ENCODE measurements at regions of chr3 and their contacts with region 1.

Region 1: DNA sequence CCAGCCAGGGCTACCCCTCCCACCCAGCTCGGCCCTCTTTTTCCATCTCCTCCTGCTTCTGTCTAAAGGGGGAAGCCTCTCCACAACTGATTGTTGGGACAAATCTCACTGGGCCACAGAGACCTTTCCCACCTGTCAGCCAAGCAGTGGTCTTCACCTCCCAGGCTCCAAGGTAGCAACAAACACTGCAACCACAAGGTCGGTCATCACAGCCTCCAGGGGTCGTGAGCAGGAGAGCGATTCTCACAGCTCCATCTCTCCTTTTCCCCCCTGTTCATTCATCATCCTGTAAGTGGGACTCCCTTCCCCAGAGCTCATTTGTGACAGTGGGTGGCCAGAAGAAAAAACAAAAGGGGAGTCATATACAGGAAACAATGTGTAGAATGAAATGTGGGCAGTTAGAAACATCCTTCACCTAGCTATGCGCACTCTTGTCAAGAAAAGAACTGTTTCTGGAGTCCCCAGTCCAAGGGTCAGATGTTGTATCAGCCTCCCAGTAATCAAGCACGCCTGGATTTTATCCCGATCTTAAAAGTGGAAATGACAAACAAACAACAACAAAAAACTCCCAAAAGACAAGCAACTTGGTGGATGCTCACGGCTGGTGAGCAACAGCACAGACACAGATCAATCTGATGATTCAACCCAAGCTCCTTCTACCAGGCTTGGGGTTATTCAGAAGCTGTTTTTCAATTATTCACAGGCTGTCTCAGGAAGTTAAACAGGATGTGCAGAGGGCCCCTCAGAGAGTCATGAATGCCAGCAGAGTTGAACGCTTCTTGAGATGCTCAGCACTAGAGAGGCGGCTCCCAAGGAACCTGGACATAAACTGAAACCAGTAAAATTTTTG is 22.4 kb downstream of the LYZL4 start:
- DNase-seq: peak; percentile 35
- ATAC-seq: peak; percentile 79
- H3K4me3 Mint-ChIP-seq: peak overlapping the region; percentile 9
- H3K27ac Mint-ChIP-seq: peak overlapping the region; percentile 87
- H3K4me1 Mint-ChIP-seq: peaks cover 18% of the 10 kb centered on the region
- H3K27me3 Mint-ChIP-seq: peaks cover 3% of the 10 kb centered on the region

Region 2: DNA sequence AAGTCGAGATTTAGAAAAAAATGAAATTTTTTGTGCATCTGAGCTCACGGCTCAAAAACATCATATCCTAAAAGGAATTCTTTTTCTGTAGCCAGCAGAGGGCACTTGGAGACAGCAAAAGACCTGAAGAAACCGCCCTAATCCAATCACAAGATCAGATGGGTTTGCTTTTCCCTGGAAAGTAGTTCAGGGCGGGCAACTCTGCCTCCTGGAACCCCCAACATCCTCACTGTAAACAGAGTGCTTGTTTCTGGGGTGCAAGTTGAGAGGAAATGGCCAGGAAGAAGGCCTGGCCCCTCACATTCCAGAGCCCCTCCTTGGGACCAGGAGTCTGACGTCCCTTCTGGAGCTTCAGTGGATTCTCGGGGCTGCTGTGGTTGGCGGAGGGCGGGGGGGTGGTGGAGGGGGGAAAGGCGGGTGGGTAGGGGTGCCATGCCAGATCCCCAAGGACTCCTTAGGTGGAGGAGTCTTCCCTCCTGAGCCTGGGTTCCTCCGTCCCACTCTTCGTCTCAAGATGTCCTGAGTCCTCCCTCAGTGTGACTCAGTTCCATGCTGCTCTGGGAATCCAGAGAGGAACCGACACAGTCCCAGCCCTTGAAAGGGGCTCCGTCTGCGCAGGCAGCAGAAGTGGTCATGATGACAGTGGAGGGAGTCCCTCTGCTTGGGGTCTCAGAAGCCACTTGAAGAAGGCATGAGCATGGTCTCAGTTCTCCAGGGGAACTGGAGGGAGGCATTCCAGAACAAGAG is 157.9 kb before region 1 on chr3:
- CTCF ChIA-PET with region 1: no interaction called
- POLR2A ChIA-PET with region 1: no interaction called
- DNase-seq: no peak
- ATAC-seq: no peak
- H3K4me3 Mint-ChIP-seq: no peak overlapping the region
- H3K27ac Mint-ChIP-seq: no peak overlapping the region
- H3K4me1 Mint-ChIP-seq: peaks cover 15% of the 10 kb centered on the region
- H3K27me3 Mint-ChIP-seq: peaks cover 9% of the 10 kb centered on the region

Region 3: DNA sequence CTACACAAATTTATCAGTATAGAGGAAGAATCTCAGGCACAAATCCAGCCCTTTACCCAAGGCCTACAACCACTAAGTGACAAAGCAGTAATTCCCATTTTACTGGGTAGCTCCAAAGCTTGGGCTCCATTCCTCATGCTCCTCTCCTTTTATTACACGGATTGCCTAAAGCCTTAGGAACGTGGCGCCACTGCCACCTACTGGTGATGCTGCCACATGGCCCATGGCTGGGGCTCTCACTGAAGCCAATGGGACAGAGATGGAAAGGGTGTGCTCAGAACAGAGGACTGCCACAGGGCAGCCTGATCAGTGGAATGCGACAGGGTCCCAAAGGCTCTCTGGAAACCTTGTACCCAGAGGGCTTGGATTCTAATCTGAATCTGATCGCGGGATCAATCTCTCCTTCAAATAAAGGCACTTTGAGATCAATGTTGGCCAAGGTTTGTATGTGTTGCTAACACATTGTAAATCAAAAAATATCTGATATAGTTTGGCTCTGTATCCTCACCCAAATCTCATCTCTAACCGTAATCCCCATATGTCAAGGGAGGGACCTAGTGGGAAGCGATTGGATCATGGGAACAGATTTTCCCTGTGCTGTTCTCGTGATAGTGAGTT is 55.9 kb after region 1 on chr3:
- CTCF ChIA-PET with region 1: interaction called, 10 read pairs
- POLR2A ChIA-PET with region 1: no interaction called
- DNase-seq: peak; percentile 81
- ATAC-seq: peak; percentile 93
- H3K4me3 Mint-ChIP-seq: no peak overlapping the region
- H3K27ac Mint-ChIP-seq: no peak overlapping the region
- H3K4me1 Mint-ChIP-seq: no peaks in the 10 kb centered on the region
- H3K27me3 Mint-ChIP-seq: peaks cover 14% of the 10 kb centered on the region

Measured in activated CD8-positive, alpha-beta T cell treated with anti-CD3 and anti-CD28 coated beads, Interleukin-2, amount 10 ng/mL, durations not matched to agents 7 days and 5 days (primary cell).